Prostate gland (tissue), 2 donors: ENCODE measurements at regions of chr1 and their contacts with region 1.

Region 1: DNA sequence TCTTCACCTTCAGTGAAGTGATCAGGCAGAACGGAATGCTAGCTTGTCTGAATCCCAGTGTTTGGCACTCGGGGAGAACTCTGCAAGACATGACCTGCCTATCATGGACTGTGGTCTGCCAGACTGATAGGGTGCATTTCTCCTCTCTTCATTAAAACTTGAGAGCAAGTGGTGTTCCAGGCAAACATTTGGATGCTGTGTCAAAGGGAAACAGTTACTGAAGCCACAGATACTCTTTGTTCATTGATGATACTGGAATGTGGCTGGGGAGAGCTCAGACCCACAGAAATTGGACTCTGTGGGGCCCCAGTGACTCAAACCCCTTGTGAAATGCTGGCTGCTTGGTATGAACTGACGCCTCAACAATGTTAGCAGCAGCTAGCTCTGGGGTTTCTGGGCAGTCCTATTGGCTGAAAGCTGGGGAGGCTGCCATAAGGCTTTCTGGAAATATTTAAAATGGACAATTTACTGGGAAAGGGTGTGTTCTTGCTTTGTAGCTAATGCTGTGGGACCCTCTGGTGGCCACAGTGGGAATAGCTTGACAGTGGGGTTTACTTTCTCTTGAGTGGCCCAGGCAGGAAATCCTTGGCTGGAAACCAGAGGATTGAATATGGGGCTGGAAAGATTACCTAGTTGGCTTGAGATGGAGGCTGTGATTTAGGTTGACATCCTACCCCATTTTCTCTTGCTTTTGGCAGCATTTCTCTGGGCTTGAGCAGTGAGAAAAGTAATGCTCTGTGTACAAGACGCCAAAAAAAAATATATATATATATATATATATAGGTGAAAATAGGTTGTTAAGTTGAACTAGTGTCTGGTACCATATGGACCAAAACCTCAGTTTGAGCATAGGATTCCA is 8.0 kb upstream of the S100A10 start:
- DNase-seq: peak; percentile 88
- H3K4me3 ChIP-seq: no peak overlapping the region
- H3K27ac ChIP-seq: no peak overlapping the region
- H3K4me1 ChIP-seq: no peaks in the 10 kb centered on the region
- H3K27me3 ChIP-seq: no peaks in the 10 kb centered on the region
- CTCF ChIP-seq: peak; percentile 83 to 93 (median 86)
- POLR2A ChIP-seq: no peak

Region 2: DNA sequence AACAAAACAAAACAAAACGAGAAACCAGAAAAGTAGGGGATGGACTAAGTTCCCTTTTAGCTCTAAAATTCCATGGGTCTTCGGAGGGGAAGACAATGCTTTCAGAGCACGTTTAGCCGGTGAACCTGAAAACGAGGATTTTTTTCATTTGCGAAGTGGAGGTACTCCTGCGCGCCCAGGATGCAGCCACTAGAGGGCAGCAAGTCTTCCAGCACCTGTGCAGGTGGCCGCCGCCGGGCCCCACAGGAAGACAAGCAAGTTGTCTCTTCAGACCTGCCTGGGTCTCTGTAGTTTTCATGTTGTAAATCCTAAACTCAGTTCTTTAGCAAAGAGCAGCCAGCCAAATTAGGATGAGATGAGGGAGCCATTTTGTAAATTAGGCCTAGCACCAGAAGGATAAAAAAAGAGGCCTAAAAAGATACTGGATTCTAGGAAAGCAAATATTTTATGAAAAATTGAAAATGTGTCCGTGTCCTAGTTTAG is 407.4 kb before region 1 on chr1:
- intact Hi-C with region 1: loop called (anchors 10 kb)
- DNase-seq: peak; percentile 85
- H3K4me3 ChIP-seq: no peak overlapping the region
- H3K27ac ChIP-seq: no peak overlapping the region
- H3K4me1 ChIP-seq: no peaks in the 10 kb centered on the region
- H3K27me3 ChIP-seq: no peaks in the 10 kb centered on the region
- CTCF ChIP-seq: peak; percentile 69 to 88 (median 86)
- POLR2A ChIP-seq: no peak

Region 3: GRCh38 chr1:151680812-151681211 is 320.8 kb before region 1 on chr1:
- intact Hi-C with region 1: no loop called
- DNase-seq: peak; percentile 25
- H3K4me3 ChIP-seq: no peak overlapping the region
- H3K27ac ChIP-seq: peak overlapping the region in 1 of 2 donors; percentile 52
- H3K4me1 ChIP-seq: peaks cover 5% of the 10 kb centered on the region
- H3K27me3 ChIP-seq: no peaks in the 10 kb centered on the region
- CTCF ChIP-seq: no peak
- POLR2A ChIP-seq: peak; percentile 11

Region 4: DNA sequence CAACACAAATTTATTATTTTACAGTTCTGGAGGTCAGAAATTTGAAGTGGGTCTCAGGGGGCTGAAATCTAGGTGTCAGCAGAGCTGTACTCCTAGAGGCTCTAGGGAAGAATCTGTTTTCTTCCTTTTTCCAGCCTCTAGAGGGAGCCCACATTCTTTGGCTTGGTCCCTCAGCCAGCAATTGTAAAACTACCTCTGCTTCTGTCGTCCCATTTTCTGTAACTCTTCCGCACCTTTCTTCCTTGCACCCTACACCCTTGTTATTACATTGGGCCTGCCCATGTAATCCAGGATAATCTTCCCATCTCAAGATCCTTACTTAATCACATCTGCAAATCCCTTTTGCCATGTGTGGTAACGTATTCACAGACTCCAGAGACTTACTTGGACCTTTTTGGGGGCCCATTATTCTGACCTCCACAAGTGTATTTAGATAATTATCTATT is 67.5 kb before region 1 on chr1:
- intact Hi-C with region 1: loop called (anchors 2 kb)
- DNase-seq: peak; percentile 52
- H3K4me3 ChIP-seq: no peak overlapping the region
- H3K27ac ChIP-seq: no peak overlapping the region
- H3K4me1 ChIP-seq: no peaks in the 10 kb centered on the region
- H3K27me3 ChIP-seq: no peaks in the 10 kb centered on the region
- CTCF ChIP-seq: peak; percentile 46 to 78 (median 72)
- POLR2A ChIP-seq: no peak